Mucosa of descending colon (tissue), 3 donors: ENCODE measurements at regions of chr7 and their contacts with region 1.

Region 1: GRCh38 chr7:106736508-106737201 is 75.7 kb upstream of the CCDC71L start:
- DNase-seq: peak in 1 of 3 donors; percentile 71
- ATAC-seq: peak; percentile 94
- H3K4me3 ChIP-seq: no peak overlapping the region
- H3K4me1 ChIP-seq: peaks cover 2% of the 10 kb centered on the region
- CTCF ChIP-seq: peak; percentile 59

Region 2: GRCh38 chr7:106644999-106645398 is 91.7 kb before region 1 on chr7:
- intact Hi-C with region 1: no loop called
- DNase-seq: no peak
- ATAC-seq: no peak
- H3K4me3 ChIP-seq: no peak overlapping the region
- H3K4me1 ChIP-seq: no peaks in the 10 kb centered on the region
- CTCF ChIP-seq: no peak

Region 3: GRCh38 chr7:106659963-106660861 is 76.4 kb before region 1 on chr7:
- intact Hi-C with region 1: loop called in 1 of 2 experiments (anchors 5 kb)
- DNase-seq: peak; percentile 90 to 91 (median 91)
- ATAC-seq: peak; percentile 88
- H3K4me3 ChIP-seq: peak overlapping the region; percentile 78
- H3K4me1 ChIP-seq: peaks cover 12% of the 10 kb centered on the region
- CTCF ChIP-seq: peak; percentile 85